ENCODE measurements at regions of chrX and their contacts with region 1.

Region 1: DNA sequence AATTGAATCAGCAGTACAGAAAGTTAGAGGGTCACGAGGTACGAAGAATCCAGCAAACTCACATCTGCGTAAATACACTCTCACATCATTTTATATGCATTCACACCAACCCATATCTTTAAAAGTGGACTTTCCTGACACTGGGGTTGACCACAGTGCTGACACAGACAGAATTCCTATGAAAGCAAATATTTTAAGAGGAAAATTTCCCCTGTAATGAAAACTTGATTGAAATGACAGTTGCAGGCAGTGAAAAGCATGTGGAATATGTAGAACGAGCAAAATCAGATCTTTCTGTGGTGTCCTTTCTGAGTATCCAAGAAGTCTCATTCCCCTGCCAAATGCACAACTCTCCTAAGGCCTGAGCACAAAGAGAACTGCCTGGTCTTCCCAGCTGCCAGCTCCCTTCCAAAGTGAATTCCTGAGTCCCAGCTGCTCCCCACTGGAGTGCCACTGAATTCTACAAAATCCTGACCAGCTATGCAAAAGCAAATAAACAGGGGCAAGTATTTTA is 50.5 kb upstream of the FAM9C start:
- DNase-seq: no peak
- ATAC-seq: no peak
- H3K4me3 ChIP-seq: no peak overlapping the region
- H3K27ac ChIP-seq: no peak overlapping the region
- H3K4me1 ChIP-seq: peaks cover 44% of the 10 kb centered on the region
- H3K27me3 ChIP-seq: no peaks in the 10 kb centered on the region
- CTCF ChIP-seq: no peak
- EP300 ChIP-seq: no peak
- POLR2A ChIP-seq: no peak
- RAD21 ChIP-seq: no peak

Region 2: DNA sequence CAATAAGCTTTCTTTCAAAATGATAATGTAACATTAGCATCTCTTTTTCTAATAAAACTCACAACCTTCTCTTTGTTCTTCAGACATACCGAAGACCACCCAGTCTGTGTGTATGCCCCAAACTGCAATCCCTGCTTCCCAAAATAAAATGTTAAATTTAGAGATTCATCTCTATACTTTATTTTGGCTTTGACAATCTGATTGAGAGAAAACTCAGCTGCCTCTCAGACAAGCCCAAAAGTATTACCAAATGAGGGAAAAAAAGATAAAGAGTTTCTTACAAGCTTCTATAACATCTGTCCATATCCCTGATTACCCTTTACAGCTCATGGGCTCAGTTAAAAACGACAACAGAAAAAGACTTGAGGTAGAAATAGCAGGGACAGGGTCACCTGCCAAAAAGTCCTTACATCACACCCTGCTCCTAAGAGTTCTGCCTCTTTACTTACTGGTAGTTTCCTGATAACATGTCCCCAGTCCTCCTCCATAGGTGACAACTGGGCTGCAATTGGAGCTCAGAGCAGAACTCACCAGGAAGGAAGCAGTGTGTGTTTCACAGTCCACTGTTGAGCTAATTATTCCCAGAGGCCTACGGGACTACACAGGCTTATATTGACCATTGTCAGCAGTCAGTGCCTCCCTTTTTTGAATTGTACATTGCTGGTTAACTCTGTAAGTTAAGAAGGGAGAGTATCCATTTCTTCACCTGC is 20.4 kb after region 1 on chrX:
- CTCF ChIA-PET with region 1: interaction called, 3 read pairs
- POLR2A ChIA-PET with region 1: interaction called, 3 read pairs
- RAD21 ChIA-PET with region 1: no interaction called
- SMC1A ChIA-PET with region 1: interaction called, 11 read pairs
- in situ Hi-C with region 1: no loop called
- intact Hi-C with region 1: no loop called
- DNase-seq: no peak
- ATAC-seq: no peak
- H3K4me3 ChIP-seq: no peak overlapping the region
- H3K27ac ChIP-seq: no peak overlapping the region
- H3K4me1 ChIP-seq: no peaks in the 10 kb centered on the region
- H3K27me3 ChIP-seq: no peaks in the 10 kb centered on the region
- CTCF ChIP-seq: no peak
- EP300 ChIP-seq: no peak
- POLR2A ChIP-seq: no peak
- RAD21 ChIP-seq: no peak

Region 3: GRCh38 chrX:13401724-13402123 is 306.8 kb after region 1 on chrX:
- CTCF ChIA-PET with region 1: no interaction called
- POLR2A ChIA-PET with region 1: no interaction called
- RAD21 ChIA-PET with region 1: no interaction called
- SMC1A ChIA-PET with region 1: no interaction called
- in situ Hi-C with region 1: no loop called
- intact Hi-C with region 1: no loop called
- DNase-seq: no peak
- ATAC-seq: no peak; the same call in 2 of the 3 replicates
- H3K4me3 ChIP-seq: no peak overlapping the region
- H3K27ac ChIP-seq: no peak overlapping the region
- H3K4me1 ChIP-seq: no peaks in the 10 kb centered on the region
- H3K27me3 ChIP-seq: no peaks in the 10 kb centered on the region
- CTCF ChIP-seq: no peak
- EP300 ChIP-seq: no peak
- POLR2A ChIP-seq: no peak
- RAD21 ChIP-seq: no peak

Measured in GM12878 (cell line).